ENCODE measurements at regions of chr10 and their contacts with region 1.

Region 1: GRCh38 chr10:101441541-101442455 is 87.8 kb downstream of the BTRC start:
- DNase-seq: no peak
- ATAC-seq: peak; percentile 94
- H3K4me3 ChIP-seq: no peak overlapping the region
- H3K27ac ChIP-seq: no peak overlapping the region
- H3K4me1 ChIP-seq: no peaks in the 10 kb centered on the region
- H3K27me3 ChIP-seq: no peaks in the 10 kb centered on the region
- CTCF ChIP-seq: peak; percentile 67 to 75 (median 67)
- EP300 ChIP-seq: no peak
- POLR2A ChIP-seq: no peak
- RAD21 ChIP-seq: peak; percentile 81

Region 2: GRCh38 chr10:101272229-101272868 is 169.4 kb before region 1 on chr10:
- CTCF ChIA-PET with region 1: interaction called, 20 read pairs
- POLR2A ChIA-PET with region 1: no interaction called
- RAD21 ChIA-PET with region 1: interaction called, 6 read pairs
- SMC1A ChIA-PET with region 1: interaction called, 3 read pairs
- in situ Hi-C with region 1: no loop called
- intact Hi-C with region 1: loop called (anchors 2 kb)
- DNase-seq: no peak
- ATAC-seq: peak; percentile 96
- H3K4me3 ChIP-seq: no peak overlapping the region
- H3K27ac ChIP-seq: no peak overlapping the region
- H3K4me1 ChIP-seq: no peaks in the 10 kb centered on the region
- H3K27me3 ChIP-seq: no peaks in the 10 kb centered on the region
- CTCF ChIP-seq: peak; percentile 74 to 84 (median 77)
- EP300 ChIP-seq: no peak
- POLR2A ChIP-seq: no peak
- RAD21 ChIP-seq: peak; percentile 54

Region 3: GRCh38 chr10:101291331-101292193 is 150.2 kb before region 1 on chr10:
- CTCF ChIA-PET with region 1: interaction called, 22 read pairs
- POLR2A ChIA-PET with region 1: no interaction called
- RAD21 ChIA-PET with region 1: interaction called, 4 read pairs
- SMC1A ChIA-PET with region 1: interaction called, 3 read pairs
- in situ Hi-C with region 1: loop called (anchors 10 kb)
- intact Hi-C with region 1: loop called (anchors 5 kb)
- DNase-seq: no peak
- ATAC-seq: peak; percentile 90
- H3K4me3 ChIP-seq: peak overlapping the region; percentile 46; the same call in 1 of the 2 replicates
- H3K27ac ChIP-seq: no peak overlapping the region
- H3K4me1 ChIP-seq: no peaks in the 10 kb centered on the region
- H3K27me3 ChIP-seq: peaks cover 10 to 19% of the 10 kb centered on the region in 2 experiments
- CTCF ChIP-seq: peak; percentile 50 to 65 (median 51)
- EP300 ChIP-seq: no peak
- POLR2A ChIP-seq: no peak
- RAD21 ChIP-seq: peak; percentile 42

Region 4: DNA sequence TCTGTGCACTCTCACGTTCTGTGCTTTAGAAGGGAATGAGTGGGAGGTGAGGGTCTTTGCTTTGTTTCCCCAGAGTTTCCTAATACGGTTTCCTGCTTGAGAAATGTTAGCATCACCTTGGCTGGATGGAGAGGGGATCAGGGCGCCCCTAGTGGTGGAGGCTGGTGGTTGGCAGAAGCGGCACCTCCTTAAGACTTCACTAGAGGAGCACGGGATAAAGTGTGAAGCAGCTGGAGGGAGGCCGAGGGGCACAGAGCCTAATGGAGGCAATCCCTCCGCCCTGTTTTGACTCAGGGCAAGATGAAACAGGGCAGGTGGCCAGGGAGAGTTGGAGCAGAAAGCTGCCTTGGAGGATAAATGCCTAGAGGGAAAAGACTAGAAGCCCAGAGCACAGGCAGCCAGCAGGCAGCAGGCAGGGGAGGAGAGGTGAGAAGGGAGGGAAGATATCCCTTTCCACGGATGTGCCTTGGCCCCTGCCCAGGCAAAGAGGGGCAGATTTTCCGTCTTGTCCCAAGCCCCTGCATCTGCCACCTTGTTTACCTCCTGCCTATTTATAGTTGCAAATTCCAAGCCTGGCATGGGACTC is 143.8 kb before region 1 on chr10:
- CTCF ChIA-PET with region 1: interaction called, 25 read pairs
- POLR2A ChIA-PET with region 1: no interaction called
- RAD21 ChIA-PET with region 1: interaction called, 5 read pairs
- SMC1A ChIA-PET with region 1: interaction called, 14 read pairs
- in situ Hi-C with region 1: loop called (anchors 10 kb)
- intact Hi-C with region 1: loop called (anchors 5 kb)
- DNase-seq: no peak
- ATAC-seq: peak; percentile 96
- H3K4me3 ChIP-seq: no peak overlapping the region
- H3K27ac ChIP-seq: no peak overlapping the region
- H3K4me1 ChIP-seq: no peaks in the 10 kb centered on the region
- H3K27me3 ChIP-seq: peaks cover 0 to 3% of the 10 kb centered on the region in 2 experiments; a peak in 2 of 4 replicates
- CTCF ChIP-seq: peak; percentile 77 to 96 (median 96)
- EP300 ChIP-seq: no peak
- POLR2A ChIP-seq: no peak
- RAD21 ChIP-seq: peak; percentile 36; the same call in 1 of the 2 replicates

Region 5: GRCh38 chr10:101353692-101354327 is 88.0 kb before region 1 on chr10 and contains the start of gene BTRC:
- CTCF ChIA-PET with region 1: interaction called, 4 read pairs
- POLR2A ChIA-PET with region 1: no interaction called
- RAD21 ChIA-PET with region 1: interaction called, 3 read pairs
- SMC1A ChIA-PET with region 1: no interaction called
- in situ Hi-C with region 1: no loop called
- intact Hi-C with region 1: loop called (anchors 5 kb)
- DNase-seq: peak; percentile 98
- ATAC-seq: peak; percentile 98
- H3K4me3 ChIP-seq: peak within 1 kb of the TSS; percentile 82
- H3K27ac ChIP-seq: peak within 1 kb of the TSS; percentile 51
- H3K4me1 ChIP-seq: 0 out of 2 replicates have a peak, but pooled peaks cover 3% of the 10 kb centered on the region
- H3K27me3 ChIP-seq: no peaks in the 10 kb centered on the region
- CTCF ChIP-seq: no peak
- EP300 ChIP-seq: peak in 1 of 2 experiments; percentile 93; a peak in 2 of 4 replicates
- POLR2A ChIP-seq: peak; percentile 79
- RAD21 ChIP-seq: no peak
- polyA plus RNA-seq, gene BTRC: 2.2 to 3.2 TPM

Region 6: DNA sequence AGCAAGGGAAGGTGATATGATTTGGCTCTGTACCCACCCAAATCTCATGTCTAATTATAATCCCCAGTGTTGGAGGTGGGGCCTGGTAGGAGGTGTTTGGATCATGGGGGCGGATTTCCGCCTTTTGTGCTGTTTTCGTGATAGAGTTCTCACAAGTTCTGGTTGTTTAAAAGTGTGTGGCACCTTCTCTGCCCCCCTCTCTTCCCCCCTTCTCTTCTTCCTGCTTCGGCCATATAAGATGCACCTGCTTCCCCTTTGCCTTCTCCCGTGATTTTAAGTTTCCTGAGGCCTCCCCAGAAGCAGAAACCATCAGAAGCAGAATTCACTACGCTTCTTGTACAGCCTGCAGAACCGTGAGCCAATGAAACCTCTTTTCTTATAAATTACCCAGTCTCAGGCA is 66.7 kb before region 1 on chr10:
- CTCF ChIA-PET with region 1: no interaction called
- POLR2A ChIA-PET with region 1: no interaction called
- RAD21 ChIA-PET with region 1: no interaction called
- SMC1A ChIA-PET with region 1: no interaction called
- in situ Hi-C with region 1: no loop called
- intact Hi-C with region 1: no loop called
- DNase-seq: no peak
- ATAC-seq: no peak
- H3K4me3 ChIP-seq: no peak overlapping the region
- H3K27ac ChIP-seq: no peak overlapping the region
- H3K4me1 ChIP-seq: no peaks in the 10 kb centered on the region
- H3K27me3 ChIP-seq: no peaks in the 10 kb centered on the region
- CTCF ChIP-seq: no peak
- EP300 ChIP-seq: no peak
- POLR2A ChIP-seq: no peak
- RAD21 ChIP-seq: no peak

Region 7: GRCh38 chr10:101453791-101454718 is 12.3 kb after region 1 on chr10:
- CTCF ChIA-PET with region 1: interaction called, 18 read pairs
- POLR2A ChIA-PET with region 1: interaction called, 3 read pairs
- RAD21 ChIA-PET with region 1: interaction called, 3 read pairs
- SMC1A ChIA-PET with region 1: interaction called, 7 read pairs
- in situ Hi-C with region 1: no loop called
- intact Hi-C with region 1: no loop called
- DNase-seq: no peak
- ATAC-seq: peak; percentile 40
- H3K4me3 ChIP-seq: no peak overlapping the region
- H3K27ac ChIP-seq: no peak overlapping the region
- H3K4me1 ChIP-seq: no peaks in the 10 kb centered on the region
- H3K27me3 ChIP-seq: no peaks in the 10 kb centered on the region
- CTCF ChIP-seq: no peak
- EP300 ChIP-seq: no peak
- POLR2A ChIP-seq: no peak
- RAD21 ChIP-seq: no peak

Region 8: DNA sequence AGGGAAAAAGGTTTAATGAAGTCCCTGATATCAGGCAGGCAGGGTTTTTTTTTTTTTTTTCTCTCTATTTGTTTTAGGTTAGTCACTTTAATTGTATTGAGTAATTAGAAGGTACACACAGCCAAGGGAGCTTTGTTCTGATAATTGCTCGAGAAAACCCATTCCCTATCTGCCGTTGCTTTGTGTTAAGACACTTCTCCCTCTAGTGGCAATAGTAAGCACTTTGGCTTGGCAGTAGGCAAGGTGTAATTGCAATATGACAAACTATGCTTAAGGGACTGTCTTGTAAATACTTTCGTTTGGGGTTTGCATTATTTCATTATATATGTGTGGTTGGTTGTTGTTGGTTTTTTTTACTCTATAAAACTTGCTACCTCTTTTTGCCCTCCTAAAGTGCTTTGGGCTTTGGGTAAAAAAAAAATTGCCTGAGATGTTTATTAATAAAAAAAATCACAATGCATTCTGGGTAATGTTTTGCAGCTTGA is 25.5 kb after region 1 on chr10:
- CTCF ChIA-PET with region 1: interaction called, 41 read pairs
- POLR2A ChIA-PET with region 1: no interaction called
- RAD21 ChIA-PET with region 1: interaction called, 5 read pairs
- SMC1A ChIA-PET with region 1: interaction called, 12 read pairs
- in situ Hi-C with region 1: no loop called
- intact Hi-C with region 1: no loop called
- DNase-seq: peak; percentile 23
- ATAC-seq: peak; percentile 96
- H3K4me3 ChIP-seq: no peak overlapping the region
- H3K27ac ChIP-seq: no peak overlapping the region
- H3K4me1 ChIP-seq: no peaks in the 10 kb centered on the region
- H3K27me3 ChIP-seq: no peaks in the 10 kb centered on the region
- CTCF ChIP-seq: peak; percentile 81 to 91 (median 81)
- EP300 ChIP-seq: no peak
- POLR2A ChIP-seq: no peak
- RAD21 ChIP-seq: peak; percentile 66

Measured in GM12878 (cell line).